ENCODE measurements at regions of chr10 and their contacts with region 1.

Region 1: GRCh38 chr10:5623081-5623748 is 43.2 kb downstream of the ASB13 start:
- DNase-seq: peak; percentile 76
- ATAC-seq: peak; percentile 99
- H3K4me3 ChIP-seq: no peak overlapping the region
- H3K27ac ChIP-seq: no peak overlapping the region
- H3K4me1 ChIP-seq: peaks cover 0 to 6% of the 10 kb centered on the region in 2 experiments; a peak in 2 of 4 replicates
- H3K27me3 ChIP-seq: no peaks in the 10 kb centered on the region
- CTCF ChIP-seq: peak; percentile 89 to 94 (median 91)
- POLR2A ChIP-seq: no peak
- RAD21 ChIP-seq: peak; percentile 99

Region 2: GRCh38 chr10:4813023-4813422 is 810.2 kb before region 1 on chr10:
- CTCF ChIA-PET with region 1: interaction called, 4 read pairs
- POLR2A ChIA-PET with region 1: no interaction called
- RAD21 ChIA-PET with region 1: interaction called in 1 of 2 experiments, 3 read pairs
- intact Hi-C with region 1: loop called (anchors 10 kb)
- DNase-seq: peak; percentile 36
- ATAC-seq: peak; percentile 74
- H3K4me3 ChIP-seq: no peak overlapping the region
- H3K27ac ChIP-seq: no peak overlapping the region
- H3K4me1 ChIP-seq: peaks cover 0 to 15% of the 10 kb centered on the region in 2 experiments; a peak in 1 of 4 replicates
- H3K27me3 ChIP-seq: no peaks in the 10 kb centered on the region
- CTCF ChIP-seq: no peak
- POLR2A ChIP-seq: no peak
- RAD21 ChIP-seq: no peak

Region 3: GRCh38 chr10:5434017-5434753 is 189.0 kb before region 1 on chr10:
- CTCF ChIA-PET with region 1: interaction called, 15 read pairs
- POLR2A ChIA-PET with region 1: no interaction called
- RAD21 ChIA-PET with region 1: interaction called in 1 of 2 experiments, 3 read pairs
- intact Hi-C with region 1: no loop called
- DNase-seq: peak; percentile 37
- ATAC-seq: peak; percentile 83
- H3K4me3 ChIP-seq: no peak overlapping the region
- H3K27ac ChIP-seq: no peak overlapping the region
- H3K4me1 ChIP-seq: no peaks in the 10 kb centered on the region
- H3K27me3 ChIP-seq: no peaks in the 10 kb centered on the region
- CTCF ChIP-seq: peak; percentile 57 to 80 (median 69); a peak in 5 of 6 replicates
- POLR2A ChIP-seq: no peak
- RAD21 ChIP-seq: peak; percentile 74

Region 4: DNA sequence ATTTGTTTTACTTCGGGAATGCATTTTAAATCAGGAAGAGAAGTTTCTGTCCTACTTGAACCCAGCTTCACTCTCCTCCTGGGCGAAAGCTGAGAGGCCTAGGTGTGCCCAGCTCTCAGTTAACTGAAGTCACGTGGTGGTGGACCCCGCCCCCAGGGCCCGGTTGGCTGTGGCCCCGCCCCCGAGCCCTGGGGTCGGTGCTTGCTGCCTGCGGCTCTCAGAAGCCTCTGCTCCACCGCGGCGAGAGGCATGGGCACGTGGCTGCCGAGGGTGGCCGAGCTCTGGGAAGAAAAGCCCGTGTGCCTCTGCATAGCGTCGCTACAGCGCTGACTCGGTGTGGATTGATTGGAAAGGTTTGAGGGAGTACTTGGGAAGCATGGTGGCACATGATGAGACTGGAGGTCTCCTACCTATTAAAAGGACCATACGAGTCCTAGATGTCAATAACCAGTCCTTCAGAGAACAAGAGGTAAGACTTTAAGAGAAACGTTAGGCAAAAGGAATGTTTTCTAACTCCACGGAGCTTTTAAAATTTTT is 176.8 kb before region 1 on chr10:
- CTCF ChIA-PET with region 1: interaction called, 59 read pairs
- POLR2A ChIA-PET with region 1: interaction called, 12 read pairs
- RAD21 ChIA-PET with region 1: interaction called, 6 to 8 read pairs
- intact Hi-C with region 1: loop called (anchors 1 kb)
- DNase-seq: peak; percentile 52
- ATAC-seq: peak; percentile 99
- H3K4me3 ChIP-seq: peak overlapping the region; percentile 37 to 52
- H3K27ac ChIP-seq: peak overlapping the region; percentile 15; the same call in 1 of the 2 replicates
- H3K4me1 ChIP-seq: peaks cover 10 to 29% of the 10 kb centered on the region in 2 experiments
- H3K27me3 ChIP-seq: no peaks in the 10 kb centered on the region
- CTCF ChIP-seq: no peak
- POLR2A ChIP-seq: no peak
- RAD21 ChIP-seq: peak; percentile 30; the same call in 1 of the 2 replicates

Region 5: DNA sequence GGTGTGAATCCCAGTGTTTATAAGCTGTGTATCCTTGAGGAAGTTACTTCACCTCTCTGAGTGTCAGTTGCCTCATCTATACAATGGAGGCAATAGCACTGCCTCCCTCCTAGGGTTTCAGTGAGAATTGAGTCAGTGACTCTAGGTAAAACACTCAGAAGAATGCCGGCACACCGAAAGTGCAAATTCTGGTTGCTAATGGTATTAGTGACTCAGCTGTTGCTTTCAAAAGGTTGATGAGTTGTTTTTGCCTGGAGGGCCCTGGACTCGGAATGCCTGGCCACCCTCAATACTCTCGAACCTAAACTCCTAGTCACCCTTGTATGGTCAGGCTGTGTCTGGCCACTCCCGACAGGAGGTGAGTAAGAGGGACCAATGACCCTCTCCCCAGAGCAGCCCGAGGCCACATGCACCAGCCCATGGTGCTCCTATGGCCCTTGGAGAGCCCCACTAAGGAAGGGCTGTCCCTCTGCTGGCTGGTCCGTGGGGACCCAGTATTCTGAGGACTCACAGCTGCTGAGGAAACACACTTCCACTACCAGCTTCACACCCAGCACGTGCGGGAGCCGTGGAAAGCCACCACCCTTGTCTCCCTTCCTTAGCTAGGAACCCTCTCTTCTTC is 38.2 kb before region 1 on chr10:
- CTCF ChIA-PET with region 1: no interaction called
- POLR2A ChIA-PET with region 1: no interaction called
- RAD21 ChIA-PET with region 1: no interaction called
- intact Hi-C with region 1: loop called (anchors 1 kb)
- DNase-seq: peak; percentile 86
- ATAC-seq: peak; percentile 80
- H3K4me3 ChIP-seq: no peak overlapping the region
- H3K27ac ChIP-seq: no peak overlapping the region
- H3K4me1 ChIP-seq: peaks cover 7 to 48% of the 10 kb centered on the region in 2 experiments
- H3K27me3 ChIP-seq: no peaks in the 10 kb centered on the region
- CTCF ChIP-seq: no peak
- POLR2A ChIP-seq: no peak
- RAD21 ChIP-seq: peak; percentile 38; the same call in 1 of the 2 replicates